BJ (cell line): ENCODE measurements at regions of chr2 and their contacts with region 1.

Region 1: GRCh38 chr2:127293748-127294562 is at the start of gene ERCC3:
- DNase-seq: peak; percentile 11
- H3K4me3 ChIP-seq: peak within 1 kb of the TSS; percentile 72
- H3K27me3 ChIP-seq: no peaks in the 10 kb centered on the region
- CTCF ChIP-seq: no peak
- polyA plus RNA-seq, gene ERCC3: 46.0 and 48.5 TPM in 2 replicates

Region 2: GRCh38 chr2:127510073-127510472 is 216.1 kb after region 1 on chr2:
- CTCF ChIA-PET with region 1: no interaction called
- POLR2A ChIA-PET with region 1: interaction called, 14 read pairs
- DNase-seq: no peak
- H3K4me3 ChIP-seq: no peak overlapping the region
- H3K27me3 ChIP-seq: no peaks in the 10 kb centered on the region
- CTCF ChIP-seq: no peak

Region 3: DNA sequence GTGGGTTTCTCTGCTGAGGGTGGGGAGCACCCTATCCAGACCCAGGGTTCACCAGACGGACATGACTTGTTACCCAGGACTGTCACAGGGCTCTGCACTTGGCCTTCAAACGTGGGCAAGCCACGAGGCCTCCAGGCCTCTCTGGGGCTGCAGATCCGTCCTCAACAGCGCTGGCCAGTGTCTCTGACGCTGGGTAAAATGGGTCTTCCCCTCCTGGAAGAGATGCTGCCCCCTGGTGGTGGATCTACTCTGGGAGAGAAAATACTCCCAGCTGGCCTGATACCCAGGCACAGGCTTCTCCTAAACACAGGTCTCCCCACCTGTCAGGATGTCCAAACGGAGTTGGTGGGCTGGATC is 355.7 kb after region 1 on chr2:
- CTCF ChIA-PET with region 1: no interaction called
- POLR2A ChIA-PET with region 1: no interaction called
- DNase-seq: no peak
- H3K4me3 ChIP-seq: no peak overlapping the region
- H3K27me3 ChIP-seq: no peaks in the 10 kb centered on the region
- CTCF ChIP-seq: peak; percentile 87